Left cardiac atrium (tissue), 4 donors: ENCODE measurements at regions of chr3 and their contacts with region 1.

Region 1: GRCh38 chr3:149592758-149593240 is 65.0 kb downstream of the WWTR1 start:
- DNase-seq: peak; percentile 63
- ATAC-seq: peak; percentile 84 to 89

Region 2: GRCh38 chr3:149618151-149619123 is 25.6 kb after region 1 on chr3:
- intact Hi-C with region 1: loop called in 1 of 2 experiments (anchors 1 kb)
- DNase-seq: peak; percentile 78
- ATAC-seq: peak; percentile 82 to 85